Activated CD4-positive, alpha-beta memory T cell treated with anti-CD3 and anti-CD28 coated beads, Interleukin-2, amount 10 ng/mL, durations not matched to agents 7 days and 5 days (primary cell): ENCODE measurements at regions of chr3 and their contacts with region 1.

Region 1: GRCh38 chr3:94062431-94063404 is at the starts of genes DHFR2 and NSUN3:
- DNase-seq: peak; percentile 86
- H3K4me3 Mint-ChIP-seq: peak within 1 kb of the TSS; percentile 86
- H3K27ac Mint-ChIP-seq: peak within 1 kb of the TSS; percentile 98
- H3K4me1 Mint-ChIP-seq: peaks cover 49% of the 10 kb centered on the region
- H3K27me3 Mint-ChIP-seq: no peaks in the 10 kb centered on the region
- total RNA-seq, gene DHFR2: 9.4 to 10.4 TPM
- total RNA-seq, gene NSUN3: 15.2 to 16.1 TPM

Region 2: DNA sequence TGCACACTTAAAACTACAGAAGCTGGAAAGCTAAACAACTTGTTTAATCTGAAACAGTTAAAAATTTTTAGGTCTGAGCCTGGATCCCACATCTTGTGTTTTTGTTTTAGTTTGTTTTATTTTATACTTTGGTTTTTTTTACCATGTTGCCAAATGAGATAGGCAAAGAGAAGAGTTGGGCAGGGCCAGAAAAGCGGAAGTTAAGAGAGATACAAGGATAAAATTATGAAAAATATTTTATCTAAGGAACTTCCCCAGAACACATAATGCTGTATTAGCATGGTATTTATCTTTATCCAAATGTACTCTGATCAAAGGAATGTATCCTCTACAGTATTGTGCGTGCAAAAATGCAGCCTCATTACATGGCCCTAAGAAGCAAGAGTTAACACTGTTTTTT is 139.7 kb before region 1 on chr3:
- CTCF ChIA-PET with region 1: no interaction called
- POLR2A ChIA-PET with region 1: no interaction called
- DNase-seq: no peak
- H3K4me3 Mint-ChIP-seq: no peak overlapping the region
- H3K27ac Mint-ChIP-seq: no peak overlapping the region
- H3K4me1 Mint-ChIP-seq: no peaks in the 10 kb centered on the region
- H3K27me3 Mint-ChIP-seq: peaks cover 3% of the 10 kb centered on the region

Region 3: DNA sequence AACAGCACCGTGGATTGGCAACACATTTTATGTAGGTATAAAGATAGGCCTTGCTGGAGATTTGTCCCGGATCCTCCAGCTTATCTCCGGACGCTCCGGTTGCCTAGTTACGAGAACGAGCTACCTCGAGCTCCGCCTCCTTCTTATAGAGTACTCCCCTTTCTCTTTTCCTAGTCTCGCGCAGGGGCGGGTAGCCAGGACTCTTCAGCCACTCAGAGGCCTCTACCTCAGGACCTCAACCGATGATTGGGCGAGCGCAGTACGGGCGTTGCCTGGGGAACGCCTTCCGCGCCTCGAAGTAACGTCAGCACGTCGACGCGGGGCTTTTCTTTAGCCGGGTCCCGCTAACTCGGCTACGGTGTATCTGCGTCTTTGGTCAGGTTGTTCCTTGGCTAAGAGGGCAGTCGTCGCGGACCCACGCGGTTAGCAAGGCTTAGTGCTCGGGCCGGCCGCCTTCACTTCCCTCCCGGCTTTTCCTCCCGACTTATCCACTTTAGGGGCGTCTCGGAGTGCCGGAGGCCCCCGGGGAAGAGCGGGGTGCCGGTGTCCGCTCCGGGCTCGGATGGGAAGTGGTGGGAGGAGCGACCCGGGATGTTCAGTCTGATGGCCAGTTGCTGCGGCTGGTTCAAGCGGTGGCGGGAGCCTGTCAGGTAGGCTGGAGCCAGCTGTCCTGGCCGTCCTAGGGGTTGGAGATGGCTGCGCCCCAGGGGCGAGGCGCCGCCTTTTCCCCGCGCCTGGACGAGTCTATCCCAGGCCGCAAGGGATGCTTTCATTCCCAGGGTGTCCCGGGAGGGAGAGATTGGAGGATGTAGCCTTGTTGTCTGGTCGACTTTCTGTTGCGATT is 82.7 kb before region 1 on chr3 and contains the start of gene ARL13B:
- CTCF ChIA-PET with region 1: no interaction called
- POLR2A ChIA-PET with region 1: interaction called, 12 read pairs
- DNase-seq: peak; percentile 96
- H3K4me3 Mint-ChIP-seq: peak within 1 kb of the TSS; percentile 79
- H3K27ac Mint-ChIP-seq: peak within 1 kb of the TSS; percentile 61
- H3K4me1 Mint-ChIP-seq: peaks cover 25% of the 10 kb centered on the region
- H3K27me3 Mint-ChIP-seq: no peaks in the 10 kb centered on the region
- total RNA-seq, gene ARL13B: 9.8 to 11.0 TPM

Region 4: DNA sequence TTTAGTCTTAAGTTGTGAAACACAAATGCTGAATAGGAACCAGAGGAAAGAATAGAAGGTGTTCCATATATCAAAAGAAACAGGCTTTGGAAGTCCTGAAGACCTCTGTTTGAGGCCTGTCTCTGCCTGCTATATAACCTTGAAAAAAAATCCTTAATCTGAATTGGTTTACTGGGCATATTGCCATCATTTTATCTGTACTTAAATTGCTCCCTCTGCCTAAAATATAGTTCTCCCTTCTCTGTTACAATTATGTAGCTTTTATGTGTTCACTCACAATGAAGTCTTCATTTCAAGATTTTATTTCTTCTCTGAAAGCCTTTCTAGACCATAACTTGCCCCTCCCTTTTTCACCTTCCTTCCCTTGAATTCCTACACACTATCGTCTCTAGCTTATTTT is 61.5 kb before region 1 on chr3:
- CTCF ChIA-PET with region 1: interaction called, 10 read pairs
- POLR2A ChIA-PET with region 1: interaction called, 19 read pairs
- DNase-seq: no peak
- H3K4me3 Mint-ChIP-seq: no peak overlapping the region
- H3K27ac Mint-ChIP-seq: no peak overlapping the region
- H3K4me1 Mint-ChIP-seq: peaks cover 3% of the 10 kb centered on the region
- H3K27me3 Mint-ChIP-seq: no peaks in the 10 kb centered on the region

Region 5: DNA sequence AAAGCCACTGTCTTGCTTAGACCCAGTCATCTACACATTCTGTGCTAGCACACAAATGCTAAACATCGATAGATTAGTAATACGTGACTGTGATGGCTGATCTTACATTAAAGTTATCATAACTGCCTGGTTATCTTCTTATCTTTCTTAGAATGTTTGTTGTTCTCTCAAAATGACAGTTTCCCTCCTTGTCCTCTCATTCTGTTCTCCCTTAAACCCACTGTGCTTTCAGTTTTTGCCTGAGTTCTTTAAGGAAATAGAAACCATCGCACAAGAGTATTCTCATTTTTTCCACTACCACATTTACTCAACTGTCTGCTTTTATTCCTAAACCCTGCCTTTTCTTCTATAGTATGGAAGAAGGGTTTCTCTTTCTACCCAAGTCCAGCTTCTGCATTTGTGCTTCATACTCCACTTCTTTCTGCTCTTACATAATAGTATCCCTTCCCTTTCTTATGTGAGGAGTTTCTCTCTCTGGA is 51.4 kb before region 1 on chr3:
- CTCF ChIA-PET with region 1: interaction called, 11 read pairs
- POLR2A ChIA-PET with region 1: interaction called, 19 read pairs
- DNase-seq: no peak
- H3K4me3 Mint-ChIP-seq: peak overlapping the region; percentile 61
- H3K27ac Mint-ChIP-seq: peak overlapping the region; percentile 80
- H3K4me1 Mint-ChIP-seq: peaks cover 36% of the 10 kb centered on the region
- H3K27me3 Mint-ChIP-seq: no peaks in the 10 kb centered on the region

Region 6: DNA sequence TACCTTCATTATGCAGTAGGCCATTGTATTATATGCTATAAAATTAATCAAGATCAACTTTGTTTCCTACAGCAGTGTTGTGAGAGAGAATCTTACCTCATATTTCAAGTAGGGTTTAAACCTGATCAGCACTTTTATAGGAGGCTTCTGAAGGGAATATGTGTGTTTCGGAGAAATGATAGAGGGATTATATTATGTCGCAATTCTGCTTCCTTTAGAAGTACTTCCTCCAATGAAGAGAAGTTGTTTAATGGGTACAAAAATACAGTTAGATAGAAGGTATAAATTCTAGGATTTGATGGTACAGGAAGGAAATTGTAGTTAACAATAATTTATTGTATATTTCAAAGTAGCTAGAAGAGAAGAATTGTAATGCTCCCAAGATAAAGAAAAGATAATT is 55.0 kb after region 1 on chr3:
- CTCF ChIA-PET with region 1: no interaction called
- POLR2A ChIA-PET with region 1: no interaction called
- DNase-seq: no peak
- H3K4me3 Mint-ChIP-seq: no peak overlapping the region
- H3K27ac Mint-ChIP-seq: no peak overlapping the region
- H3K4me1 Mint-ChIP-seq: no peaks in the 10 kb centered on the region
- H3K27me3 Mint-ChIP-seq: no peaks in the 10 kb centered on the region